Heart left ventricle (tissue), 16 donors: ENCODE measurements at regions of chr15 and their contacts with region 1.

Region 1: GRCh38 chr15:85044251-85044853 is 62.7 kb downstream of the PDE8A start:
- DNase-seq: peak in 3 of 5 donors; percentile 48 to 72 (median 63)
- ATAC-seq: peak; percentile 58 to 80 (median 76)
- H3K4me3 ChIP-seq: no peak overlapping the region
- H3K27ac ChIP-seq: peak overlapping the region in 2 of 12 donors; percentile 48 to 75
- H3K4me1 ChIP-seq: peaks cover 0 to 49% (median 26%) of the 10 kb centered on the region in 12 donors
- H3K27me3 ChIP-seq: no peaks in the 10 kb centered on the region
- CTCF ChIP-seq: peak; percentile 44 to 79 (median 68)
- POLR2A ChIP-seq: no peak

Region 2: DNA sequence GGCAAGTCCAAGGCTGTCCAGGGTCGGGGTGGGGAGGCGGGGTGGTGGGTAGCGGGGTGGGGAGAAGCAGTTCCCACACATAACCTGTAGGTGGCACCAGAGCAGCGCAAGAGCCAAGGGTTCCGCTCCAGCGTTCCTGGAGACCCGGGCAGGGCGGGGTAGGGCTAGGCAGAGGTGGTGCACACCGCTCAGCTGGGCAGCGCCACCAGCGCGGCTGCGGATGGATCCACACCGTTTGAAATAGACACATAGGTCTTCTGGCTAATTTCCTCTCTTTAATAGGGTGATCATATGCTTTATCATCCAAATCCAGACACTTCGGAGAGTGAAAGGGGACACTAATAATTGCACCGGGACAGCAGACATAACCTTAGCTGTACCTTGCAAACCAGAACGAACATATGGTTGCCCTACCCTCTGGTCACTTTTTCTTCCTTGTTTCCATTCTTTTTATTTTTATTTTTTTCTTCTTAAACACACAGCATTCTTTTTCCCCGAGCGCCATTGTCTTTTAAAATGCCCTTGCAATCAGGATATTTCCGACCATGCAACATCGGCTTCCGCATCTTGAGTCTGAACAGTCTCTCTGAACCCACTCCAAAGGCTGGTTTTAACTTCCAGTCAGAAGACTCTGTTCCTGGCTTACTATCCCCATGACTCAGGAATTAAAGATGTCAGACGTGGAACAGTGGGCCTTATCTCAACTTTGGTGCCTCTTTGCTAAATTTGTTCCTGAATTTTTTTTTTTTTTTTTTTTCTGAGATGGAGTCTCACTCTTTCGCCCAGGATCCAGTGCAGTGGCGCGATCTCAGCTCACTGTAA is 456.1 kb before region 1 on chr15:
- intact Hi-C with region 1: loop called in 4 of 10 experiments (anchors 10 kb)
- DNase-seq: peak; percentile 84 to 92 (median 87)
- ATAC-seq: peak; percentile 98 to 99 (median 99)
- H3K4me3 ChIP-seq: peak overlapping the region in 10 of 12 donors; percentile 25 to 58 (median 44)
- H3K27ac ChIP-seq: no peak overlapping the region
- H3K4me1 ChIP-seq: peaks cover 0 to 10% (median 3%) of the 10 kb centered on the region in 12 donors
- H3K27me3 ChIP-seq: no peaks in the 10 kb centered on the region
- CTCF ChIP-seq: peak; percentile 82 to 98 (median 90)
- POLR2A ChIP-seq: no peak

Region 3: DNA sequence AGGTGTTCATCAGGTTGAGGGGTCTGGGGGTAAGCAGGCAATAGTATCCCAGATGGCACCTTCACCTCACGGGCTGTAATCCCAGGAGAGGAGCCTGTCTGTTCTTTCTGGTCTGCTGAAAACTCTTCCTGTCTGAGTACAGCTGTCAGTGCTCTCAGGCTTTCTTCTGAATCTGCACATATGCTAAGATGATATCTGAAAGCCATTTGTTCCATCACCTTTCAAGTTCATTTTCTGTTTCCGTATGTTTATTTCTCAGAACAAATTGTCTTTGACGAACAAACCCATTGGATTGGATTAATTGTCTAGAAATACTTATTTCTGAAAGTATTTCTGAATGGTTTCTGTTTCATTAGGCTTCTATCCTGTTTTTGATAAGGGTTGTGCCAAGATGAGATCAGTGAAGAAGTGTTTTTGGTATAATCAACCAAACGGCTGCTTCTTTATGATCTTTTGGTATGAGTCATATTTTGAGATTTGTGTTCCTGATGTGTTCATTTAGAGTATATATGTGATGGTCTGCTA is 282.7 kb before region 1 on chr15:
- intact Hi-C with region 1: loop called in 1 of 10 experiments (anchors 5 kb)
- DNase-seq: no peak
- ATAC-seq: no peak
- H3K4me3 ChIP-seq: no peak overlapping the region
- H3K27ac ChIP-seq: peak overlapping the region in 1 of 12 donors; percentile 40
- H3K4me1 ChIP-seq: peaks cover 8 to 73% (median 60%) of the 10 kb centered on the region in 12 donors
- H3K27me3 ChIP-seq: no peaks in the 10 kb centered on the region
- CTCF ChIP-seq: no peak
- POLR2A ChIP-seq: no peak

Region 4: GRCh38 chr15:84955089-84955848 is 89.1 kb before region 1 on chr15:
- intact Hi-C with region 1: loop called (anchors 1 to 2 kb)
- DNase-seq: peak; percentile 72 to 79 (median 78)
- ATAC-seq: peak; percentile 87 to 97 (median 94)
- H3K4me3 ChIP-seq: peak overlapping the region in 10 of 12 donors; percentile 25 to 46 (median 32)
- H3K27ac ChIP-seq: peak overlapping the region in 1 of 12 donors; percentile 35
- H3K4me1 ChIP-seq: peaks cover 0 to 24% (median 10%) of the 10 kb centered on the region in 12 donors
- H3K27me3 ChIP-seq: no peaks in the 10 kb centered on the region
- CTCF ChIP-seq: peak; percentile 76 to 94 (median 88)
- POLR2A ChIP-seq: no peak

Region 5: DNA sequence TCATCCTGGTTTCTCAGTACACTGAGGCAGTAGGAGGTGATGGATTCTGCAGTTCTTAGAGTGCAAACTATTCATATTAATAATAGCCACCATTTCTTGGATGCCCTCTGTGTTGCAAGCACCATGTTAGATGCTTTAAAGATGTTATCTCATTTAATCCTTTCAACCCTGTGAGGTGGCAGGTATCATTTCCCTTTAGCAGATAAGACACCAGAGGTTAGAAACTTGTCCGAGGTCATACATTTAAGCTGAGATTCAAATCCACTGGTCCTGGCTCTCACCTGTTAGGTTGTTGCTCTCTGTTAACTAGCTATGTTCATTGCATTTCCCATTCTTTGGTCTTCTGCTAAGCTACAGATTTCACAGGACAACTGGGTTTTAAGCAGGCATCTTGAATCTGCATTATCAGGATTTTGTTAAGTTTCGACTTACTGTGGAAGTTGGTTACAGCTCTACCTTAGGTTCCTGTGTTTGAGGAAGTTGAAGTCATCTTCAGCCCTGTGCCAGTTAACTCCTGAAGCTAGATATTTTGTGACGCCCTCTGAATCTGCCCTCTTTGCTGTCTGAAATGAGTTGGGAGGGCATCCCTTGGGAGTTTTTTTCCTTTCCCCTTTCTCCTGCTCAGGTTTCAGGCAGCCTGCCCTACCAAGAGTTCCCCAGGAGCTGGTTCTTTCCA is 56.3 kb before region 1 on chr15:
- intact Hi-C with region 1: loop called in 3 of 10 experiments (anchors 2 to 5 kb)
- DNase-seq: no peak
- ATAC-seq: no peak
- H3K4me3 ChIP-seq: no peak overlapping the region
- H3K27ac ChIP-seq: peak overlapping the region in 1 of 12 donors; percentile 39
- H3K4me1 ChIP-seq: peaks cover 3 to 89% (median 60%) of the 10 kb centered on the region in 12 donors
- H3K27me3 ChIP-seq: no peaks in the 10 kb centered on the region
- CTCF ChIP-seq: no peak
- POLR2A ChIP-seq: no peak

Region 6: GRCh38 chr15:85010386-85011159 is 33.8 kb before region 1 on chr15:
- intact Hi-C with region 1: no loop called
- DNase-seq: no peak
- ATAC-seq: peak; percentile 75 to 85 (median 79)
- H3K4me3 ChIP-seq: no peak overlapping the region
- H3K27ac ChIP-seq: peak overlapping the region; percentile 35 to 89 (median 68)
- H3K4me1 ChIP-seq: peaks cover 21 to 62% (median 48%) of the 10 kb centered on the region in 12 donors
- H3K27me3 ChIP-seq: no peaks in the 10 kb centered on the region
- CTCF ChIP-seq: peak in 2 of 12 donors; percentile 49 to 60
- POLR2A ChIP-seq: no peak

Region 7: DNA sequence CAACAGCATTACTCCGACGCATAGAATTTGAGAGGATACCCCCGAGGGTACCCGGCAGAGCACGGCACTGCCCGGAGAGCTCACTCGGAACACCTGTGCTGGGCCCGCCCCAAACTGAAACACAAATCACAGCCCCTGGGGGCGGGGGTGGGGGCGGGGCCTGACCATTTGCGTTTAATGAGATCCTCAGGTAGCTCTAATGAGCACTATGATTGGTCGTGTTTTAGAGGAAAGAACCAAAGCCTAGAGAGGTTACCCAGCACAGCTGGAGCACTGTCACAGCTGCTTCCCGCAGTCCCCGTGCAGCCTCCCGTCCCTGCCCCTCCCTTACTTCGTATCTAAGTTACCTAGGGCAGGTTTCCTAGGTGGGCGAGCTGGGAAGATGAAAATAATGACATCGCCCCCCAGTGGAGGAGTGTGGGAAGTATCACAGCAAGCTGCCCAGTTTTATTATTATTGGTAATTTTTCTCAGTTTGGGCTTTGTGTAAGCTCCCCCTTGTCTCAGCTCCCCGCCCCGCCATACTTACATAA is 124.4 kb after region 1 on chr15:
- intact Hi-C with region 1: no loop called
- DNase-seq: no peak
- ATAC-seq: peak in 3 of 4 donors; percentile 29 to 37 (median 29)
- H3K4me3 ChIP-seq: peak overlapping the region in 9 of 12 donors; percentile 9 to 40 (median 18)
- H3K27ac ChIP-seq: no peak overlapping the region
- H3K4me1 ChIP-seq: peaks cover 0 to 7% (median 6%) of the 10 kb centered on the region in 12 donors
- H3K27me3 ChIP-seq: peaks cover 0 to 21% (median 0%) of the 10 kb centered on the region in 9 donors
- CTCF ChIP-seq: peak; percentile 13 to 56 (median 34)
- POLR2A ChIP-seq: no peak